ENCODE measurements at regions of chr4 and their contacts with region 1.

Region 1: GRCh38 chr4:77959566-77960338 is 97.1 kb downstream of the MRPL1 start:
- DNase-seq: no peak
- H3K4me3 ChIP-seq: no peak overlapping the region
- H3K27ac ChIP-seq: no peak overlapping the region
- H3K4me1 ChIP-seq: no peaks in the 10 kb centered on the region
- H3K27me3 ChIP-seq: no peaks in the 10 kb centered on the region
- CTCF ChIP-seq: peak; percentile 52

Region 2: DNA sequence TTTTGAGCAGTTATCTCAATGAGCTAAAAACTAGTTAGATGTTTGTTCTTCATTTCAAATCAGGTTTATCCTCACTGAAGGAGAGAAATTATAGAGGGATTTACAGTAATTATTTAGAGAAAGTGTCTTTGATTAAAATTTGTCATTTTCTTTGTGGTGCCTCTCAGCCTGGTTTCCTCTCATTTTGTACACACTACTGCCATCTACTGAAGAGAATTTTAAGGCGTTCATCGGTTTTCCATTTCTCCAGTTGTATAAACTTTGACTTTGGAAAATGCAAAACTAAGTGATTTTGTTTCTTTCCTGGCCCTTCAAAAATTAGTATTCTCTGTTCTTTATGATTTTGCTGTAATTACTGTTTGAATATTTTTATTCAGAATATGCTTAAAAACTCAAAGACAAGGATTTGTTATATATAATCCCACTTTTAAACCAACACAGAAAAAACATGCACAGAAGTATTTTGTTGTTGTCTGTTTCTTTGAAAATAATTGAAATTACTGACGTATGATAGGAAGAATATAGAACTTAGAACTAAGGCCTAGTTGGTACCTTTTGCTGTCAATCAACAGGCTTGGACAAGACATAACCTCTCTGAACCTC is 557.4 kb after region 1 on chr4:
- intact Hi-C with region 1: loop called (anchors 10 kb)
- DNase-seq: no peak
- H3K4me3 ChIP-seq: no peak overlapping the region
- H3K27ac ChIP-seq: no peak overlapping the region
- H3K4me1 ChIP-seq: no peaks in the 10 kb centered on the region
- H3K27me3 ChIP-seq: no peaks in the 10 kb centered on the region
- CTCF ChIP-seq: peak; percentile 40 to 50